Mammary epithelial cell (primary cell): ENCODE measurements at regions of chr10 and their contacts with region 1.

Region 1: GRCh38 chr10:11874542-11875177 is 51.5 kb downstream of the PROSER2 start:
- DNase-seq: peak; percentile 72
- H3K4me3 ChIP-seq: no peak overlapping the region
- H3K27ac ChIP-seq: peak overlapping the region; percentile 89
- H3K4me1 ChIP-seq: peaks cover 25% of the 10 kb centered on the region
- H3K27me3 ChIP-seq: no peaks in the 10 kb centered on the region
- CTCF ChIP-seq: no peak

Region 2: DNA sequence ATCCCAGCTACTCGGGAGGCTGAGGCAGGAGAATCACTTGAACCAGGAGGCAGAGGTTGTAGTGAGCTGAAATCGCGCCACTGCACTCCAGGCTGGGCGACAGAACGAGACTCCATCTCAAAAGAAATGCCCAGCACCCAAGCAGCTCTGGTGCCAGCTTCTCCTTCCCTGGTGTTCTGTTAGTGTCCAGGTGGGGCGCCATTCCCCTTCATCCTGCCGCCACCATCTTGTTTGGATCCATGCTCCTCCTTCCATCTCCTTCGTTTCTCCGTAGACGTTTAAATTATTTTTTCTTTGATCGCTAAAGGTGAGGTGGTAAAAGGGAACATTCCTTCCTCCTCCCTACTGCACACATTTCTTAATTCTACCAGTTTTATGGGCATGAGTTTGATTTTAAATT is 21.2 kb before region 1 on chr10:
- CTCF ChIA-PET with region 1: interaction called, 10 read pairs
- dilution Hi-C with region 1: no loop called
- in situ Hi-C with region 1: no loop called
- intact Hi-C with region 1: no loop called
- DNase-seq: no peak
- H3K4me3 ChIP-seq: no peak overlapping the region
- H3K27ac ChIP-seq: no peak overlapping the region
- H3K4me1 ChIP-seq: peaks cover 2% of the 10 kb centered on the region
- H3K27me3 ChIP-seq: no peaks in the 10 kb centered on the region
- CTCF ChIP-seq: peak; percentile 21 to 26

Region 3: GRCh38 chr10:11898372-11899066 is 23.9 kb after region 1 on chr10:
- CTCF ChIA-PET with region 1: no interaction called
- dilution Hi-C with region 1: no loop called
- in situ Hi-C with region 1: no loop called
- intact Hi-C with region 1: loop called (anchors 1 kb)
- DNase-seq: peak; percentile 85
- H3K4me3 ChIP-seq: no peak overlapping the region
- H3K27ac ChIP-seq: peak overlapping the region; percentile 83
- H3K4me1 ChIP-seq: peaks cover 24% of the 10 kb centered on the region
- H3K27me3 ChIP-seq: no peaks in the 10 kb centered on the region
- CTCF ChIP-seq: no peak

Region 4: DNA sequence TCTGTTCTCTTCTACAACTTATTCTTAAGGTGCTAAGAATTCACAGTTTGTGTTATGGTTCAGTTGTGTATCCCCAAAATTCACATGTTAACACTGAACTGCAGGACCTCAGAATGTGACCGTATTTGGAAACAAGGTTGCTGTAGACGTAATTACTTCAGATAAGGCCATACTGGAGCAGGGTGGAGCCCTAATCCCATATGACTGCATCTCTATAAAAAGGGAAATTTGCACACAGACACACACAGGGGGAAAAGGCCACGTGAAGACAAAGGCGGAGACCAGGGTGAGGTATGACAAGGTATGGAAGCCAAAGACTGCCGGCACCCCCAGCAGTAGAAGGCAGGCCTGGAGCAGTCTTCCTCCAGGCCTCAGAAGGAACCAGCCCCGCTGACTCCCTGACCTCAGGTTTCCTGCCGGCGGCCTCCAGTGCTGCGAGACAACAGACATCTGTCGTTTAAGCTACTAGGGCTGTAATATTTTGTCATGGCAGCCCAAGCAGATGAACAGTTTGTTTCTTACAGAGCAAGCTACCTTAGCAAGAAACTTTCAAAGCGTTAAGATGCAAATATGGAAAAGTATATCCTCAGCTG is 47.2 kb after region 1 on chr10:
- CTCF ChIA-PET with region 1: no interaction called
- dilution Hi-C with region 1: no loop called
- in situ Hi-C with region 1: no loop called
- intact Hi-C with region 1: loop called (anchors 5 kb)
- DNase-seq: no peak
- H3K4me3 ChIP-seq: no peak overlapping the region
- H3K27ac ChIP-seq: no peak overlapping the region
- H3K4me1 ChIP-seq: no peaks in the 10 kb centered on the region
- H3K27me3 ChIP-seq: no peaks in the 10 kb centered on the region
- CTCF ChIP-seq: no peak